ENCODE measurements at regions of chr11 and their contacts with region 1.

Region 1: GRCh38 chr11:13462901-13463778 is at the start of gene BTBD10:
- DNase-seq: peak; percentile 95
- ATAC-seq: peak; percentile 98
- H3K4me3 Mint-ChIP-seq: peak within 1 kb of the TSS; percentile 99
- H3K27ac Mint-ChIP-seq: peak within 1 kb of the TSS; percentile 99
- H3K4me1 Mint-ChIP-seq: peaks cover 41% of the 10 kb centered on the region
- H3K27me3 Mint-ChIP-seq: peaks cover 4% of the 10 kb centered on the region
- total RNA-seq, gene BTBD10: 25.7 to 26.2 TPM

Region 2: DNA sequence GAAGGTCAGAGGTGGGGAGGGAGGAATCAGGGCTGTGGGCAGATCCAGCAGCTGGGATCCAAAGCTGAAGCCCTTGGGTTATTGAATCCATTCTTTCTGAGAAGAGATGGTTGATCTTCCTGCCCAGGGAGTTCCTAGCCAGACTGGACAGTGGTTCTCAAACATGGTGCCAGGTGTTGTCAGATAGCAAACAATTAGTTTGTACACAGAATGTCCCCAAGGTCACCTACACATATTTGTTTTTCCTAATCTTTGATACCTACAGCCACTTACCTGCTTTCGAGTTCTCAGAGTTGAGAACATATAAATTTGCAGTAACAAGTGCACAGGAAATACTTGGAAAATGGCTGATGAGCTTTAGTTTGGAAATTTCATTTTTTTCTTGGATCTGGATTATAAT is 131.0 kb before region 1 on chr11:
- CTCF ChIA-PET with region 1: no interaction called
- POLR2A ChIA-PET with region 1: no interaction called
- DNase-seq: no peak
- ATAC-seq: no peak
- H3K4me3 Mint-ChIP-seq: no peak overlapping the region
- H3K27ac Mint-ChIP-seq: no peak overlapping the region
- H3K4me1 Mint-ChIP-seq: peaks cover 41% of the 10 kb centered on the region
- H3K27me3 Mint-ChIP-seq: no peaks in the 10 kb centered on the region

Region 3: DNA sequence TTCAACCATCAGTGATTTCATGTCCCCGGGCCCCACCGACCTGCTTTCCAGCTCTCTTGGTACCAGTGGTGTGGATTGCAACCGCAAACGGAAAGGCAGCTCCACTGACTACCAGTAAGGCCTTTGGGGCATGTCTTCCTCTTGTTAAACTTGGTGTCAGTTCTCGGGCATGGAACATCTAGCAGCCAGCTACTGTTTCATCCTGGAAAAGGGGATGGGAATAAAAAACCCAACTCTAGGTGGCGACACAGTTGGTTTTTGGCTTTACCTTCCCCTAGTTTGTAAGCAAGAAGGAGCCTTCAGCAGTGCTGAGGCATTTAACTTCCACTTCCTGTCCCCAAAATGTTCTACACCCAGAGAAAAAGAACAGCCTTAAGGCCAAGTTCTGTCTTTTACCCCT is 108.8 kb before region 1 on chr11:
- CTCF ChIA-PET with region 1: interaction called, 12 read pairs
- POLR2A ChIA-PET with region 1: interaction called, 3 read pairs
- DNase-seq: no peak
- ATAC-seq: no peak
- H3K4me3 Mint-ChIP-seq: no peak overlapping the region
- H3K27ac Mint-ChIP-seq: no peak overlapping the region
- H3K4me1 Mint-ChIP-seq: no peaks in the 10 kb centered on the region
- H3K27me3 Mint-ChIP-seq: no peaks in the 10 kb centered on the region

Region 4: GRCh38 chr11:13450832-13451397 is 12.2 kb before region 1 on chr11:
- CTCF ChIA-PET with region 1: interaction called, 10 read pairs
- POLR2A ChIA-PET with region 1: interaction called, 19 read pairs
- DNase-seq: peak; percentile 30
- ATAC-seq: no peak
- H3K4me3 Mint-ChIP-seq: no peak overlapping the region
- H3K27ac Mint-ChIP-seq: peak overlapping the region; percentile 74
- H3K4me1 Mint-ChIP-seq: peaks cover 34% of the 10 kb centered on the region
- H3K27me3 Mint-ChIP-seq: no peaks in the 10 kb centered on the region

Region 5: GRCh38 chr11:13486926-13487660 is 24.0 kb after region 1 on chr11:
- CTCF ChIA-PET with region 1: interaction called, 10 read pairs
- POLR2A ChIA-PET with region 1: interaction called, 15 read pairs
- DNase-seq: peak; percentile 64
- ATAC-seq: peak; percentile 93
- H3K4me3 Mint-ChIP-seq: peak overlapping the region; percentile 12
- H3K27ac Mint-ChIP-seq: no peak overlapping the region
- H3K4me1 Mint-ChIP-seq: peaks cover 6% of the 10 kb centered on the region
- H3K27me3 Mint-ChIP-seq: peaks cover 13% of the 10 kb centered on the region